ENCODE measurements at regions of chr19 and their contacts with region 1.

Region 1: GRCh38 chr19:11887611-11888531 is at the start of gene ZNF69:
- DNase-seq: peak; percentile 91
- H3K4me3 ChIP-seq: peak within 1 kb of the TSS; percentile 57 to 75
- H3K27ac ChIP-seq: peak within 1 kb of the TSS; percentile 92 to 96
- H3K4me1 ChIP-seq: no peaks in the 10 kb centered on the region
- H3K27me3 ChIP-seq: no peaks in the 10 kb centered on the region
- CTCF ChIP-seq: peak in 3 of 4 experiments; percentile 26 to 42 (median 33)
- POLR2A ChIP-seq: peak; percentile 53
- total RNA-seq, gene ZNF69: 14.4 to 28.1 TPM

Region 2: GRCh38 chr19:11942843-11943108 is 54.9 kb after region 1 on chr19:
- intact Hi-C with region 1: no loop called
- DNase-seq: no peak
- H3K4me3 ChIP-seq: no peak overlapping the region
- H3K27ac ChIP-seq: no peak overlapping the region
- H3K4me1 ChIP-seq: no peaks in the 10 kb centered on the region
- H3K27me3 ChIP-seq: no peaks in the 10 kb centered on the region
- CTCF ChIP-seq: no peak
- POLR2A ChIP-seq: no peak

Region 3: GRCh38 chr19:12064590-12065538 is 177.0 kb after region 1 on chr19 and contains the start of gene ZNF844:
- intact Hi-C with region 1: loop called (anchors 10 kb)
- DNase-seq: peak; percentile 97
- H3K4me3 ChIP-seq: peak within 1 kb of the TSS; percentile 90 to 91
- H3K27ac ChIP-seq: peak within 1 kb of the TSS; percentile 91 to 93
- H3K4me1 ChIP-seq: peaks cover 4% of the 10 kb centered on the region
- H3K27me3 ChIP-seq: no peaks in the 10 kb centered on the region
- CTCF ChIP-seq: peak in 1 of 4 experiments; percentile 25
- POLR2A ChIP-seq: peak; percentile 96
- total RNA-seq, gene ZNF844: 13.4 to 16.2 TPM

Measured in prostate gland (tissue), 2 donors.